ENCODE measurements at regions of chr1 and their contacts with region 1.

Region 1: DNA sequence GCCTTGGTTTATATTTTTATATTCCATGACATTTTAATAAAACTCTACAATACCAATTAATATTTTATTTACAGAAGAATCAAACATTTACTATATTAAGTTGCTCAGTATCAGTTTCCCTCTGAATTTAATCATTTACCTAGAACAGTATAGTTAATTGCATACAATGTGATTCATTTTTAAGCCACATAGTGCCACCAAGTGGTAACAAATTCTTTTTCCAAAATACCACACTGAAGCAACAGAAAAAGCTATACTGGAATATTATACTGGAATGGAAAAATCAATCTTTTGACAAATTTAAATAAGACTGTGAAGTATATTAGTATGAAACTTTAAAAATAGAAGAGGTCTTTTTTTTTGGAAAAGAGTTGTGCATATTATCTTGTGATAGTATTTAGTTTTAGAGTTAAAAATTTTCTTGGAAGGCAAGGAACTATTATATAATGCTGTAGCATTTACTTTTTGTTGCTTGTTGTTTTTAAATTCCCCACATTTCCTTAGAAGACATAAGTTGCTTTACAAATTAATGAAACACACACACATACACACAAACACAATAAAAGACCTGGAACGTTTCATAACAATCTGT is 57.3 kb downstream of the ZNF644 start:
- DNase-seq: peak in 2 of 9 experiments; percentile 18 to 33
- ATAC-seq: no peak
- H3K4me3 ChIP-seq: no peak overlapping the region
- H3K4me3 Mint-ChIP-seq: no peak overlapping the region
- H3K27ac ChIP-seq: no peak overlapping the region
- H3K27ac Mint-ChIP-seq: no peak overlapping the region
- H3K4me1 ChIP-seq: peaks cover 9% of the 10 kb centered on the region
- H3K4me1 Mint-ChIP-seq: peaks cover 62% of the 10 kb centered on the region
- H3K27me3 ChIP-seq: no peaks in the 10 kb centered on the region
- H3K27me3 Mint-ChIP-seq: no peaks in the 10 kb centered on the region
- CTCF ChIP-seq: no peak

Region 2: DNA sequence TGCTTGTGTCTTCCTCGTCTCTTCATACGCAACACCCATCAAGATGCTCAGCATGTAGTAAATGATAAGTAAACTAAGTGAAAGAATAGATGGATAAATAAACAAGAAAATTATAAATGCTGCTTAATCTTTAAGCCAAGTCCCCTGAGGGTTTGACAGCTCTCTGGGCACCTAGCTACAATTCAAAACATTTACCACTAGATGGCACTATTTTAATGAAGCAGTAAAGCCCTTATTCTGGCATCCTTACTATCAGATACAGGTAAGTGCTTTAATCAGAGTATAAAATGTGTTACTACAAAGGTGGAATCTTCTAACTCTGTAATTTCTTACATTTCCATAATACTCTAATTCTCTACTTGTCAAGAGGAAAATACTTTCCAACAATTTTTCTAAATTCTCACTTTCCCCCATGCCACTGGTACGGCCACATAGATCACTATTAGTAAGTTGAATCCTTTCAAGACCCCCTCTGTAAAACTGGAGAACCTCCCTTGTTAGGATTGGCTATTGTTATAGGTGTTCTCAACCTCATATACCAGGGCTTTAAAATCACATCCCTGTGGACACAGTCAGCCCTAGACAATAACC is 385.2 kb before region 1 on chr1:
- CTCF ChIA-PET with region 1: interaction called, 4 read pairs
- POLR2A ChIA-PET with region 1: no interaction called
- intact Hi-C with region 1: loop called in 1 of 2 experiments (anchors 2 kb)
- DNase-seq: peak in 2 of 9 experiments; percentile 37 to 50
- ATAC-seq: no peak
- H3K4me3 ChIP-seq: no peak overlapping the region
- H3K4me3 Mint-ChIP-seq: no peak overlapping the region
- H3K27ac ChIP-seq: no peak overlapping the region
- H3K27ac Mint-ChIP-seq: no peak overlapping the region
- H3K4me1 ChIP-seq: no peaks in the 10 kb centered on the region
- H3K4me1 Mint-ChIP-seq: no peaks in the 10 kb centered on the region
- H3K27me3 ChIP-seq: peaks cover 2 to 3% of the 10 kb centered on the region in 2 experiments
- H3K27me3 Mint-ChIP-seq: no peaks in the 10 kb centered on the region
- CTCF ChIP-seq: peak; percentile 56

Region 3: GRCh38 chr1:90721210-90722194 is 243.0 kb before region 1 on chr1:
- CTCF ChIA-PET with region 1: no interaction called
- POLR2A ChIA-PET with region 1: interaction called, 3 read pairs
- intact Hi-C with region 1: loop called (anchors 5 to 10 kb)
- DNase-seq: peak in 6 of 9 experiments; percentile 20 to 69 (median 46)
- ATAC-seq: peak; percentile 50
- H3K4me3 ChIP-seq: no peak overlapping the region
- H3K4me3 Mint-ChIP-seq: no peak overlapping the region
- H3K27ac ChIP-seq: no peak overlapping the region
- H3K27ac Mint-ChIP-seq: no peak overlapping the region
- H3K4me1 ChIP-seq: peaks cover 37% of the 10 kb centered on the region
- H3K4me1 Mint-ChIP-seq: peaks cover 47% of the 10 kb centered on the region
- H3K27me3 ChIP-seq: peaks cover 74 to 83% of the 10 kb centered on the region in 2 experiments
- H3K27me3 Mint-ChIP-seq: peaks cover 81% of the 10 kb centered on the region
- CTCF ChIP-seq: peak; percentile 62

Measured in CD8-positive, alpha-beta T cell (primary cell).